ENCODE measurements at regions of chr17 and their contacts with region 1.

Region 1: DNA sequence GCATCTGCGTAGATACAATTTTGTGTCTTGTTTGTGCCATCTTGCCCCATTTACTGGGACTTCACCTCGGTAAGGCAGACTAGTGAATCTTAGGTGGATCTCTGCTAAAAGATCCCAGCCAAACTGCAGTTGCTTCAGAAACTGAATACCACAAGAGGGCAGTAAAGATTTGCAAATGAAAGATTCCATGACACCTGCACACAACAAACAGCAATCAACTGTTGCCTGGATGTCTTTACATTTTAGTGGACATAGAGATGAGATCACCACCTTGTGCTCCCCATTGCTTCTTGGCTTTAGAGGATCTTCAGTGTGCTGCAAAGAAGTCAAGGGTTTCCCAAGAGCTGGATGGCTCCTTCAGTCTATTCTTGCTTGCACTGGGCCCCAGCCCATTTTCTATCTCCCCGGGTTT is 119.2 kb upstream of the CACNG5 start:
- DNase-seq: no peak
- H3K4me3 ChIP-seq: no peak overlapping the region
- H3K27ac ChIP-seq: no peak overlapping the region
- H3K4me1 ChIP-seq: no peaks in the 10 kb centered on the region
- H3K27me3 ChIP-seq: no peaks in the 10 kb centered on the region
- CTCF ChIP-seq: peak; percentile 48 to 75 (median 70)
- POLR2A ChIP-seq: no peak

Region 2: DNA sequence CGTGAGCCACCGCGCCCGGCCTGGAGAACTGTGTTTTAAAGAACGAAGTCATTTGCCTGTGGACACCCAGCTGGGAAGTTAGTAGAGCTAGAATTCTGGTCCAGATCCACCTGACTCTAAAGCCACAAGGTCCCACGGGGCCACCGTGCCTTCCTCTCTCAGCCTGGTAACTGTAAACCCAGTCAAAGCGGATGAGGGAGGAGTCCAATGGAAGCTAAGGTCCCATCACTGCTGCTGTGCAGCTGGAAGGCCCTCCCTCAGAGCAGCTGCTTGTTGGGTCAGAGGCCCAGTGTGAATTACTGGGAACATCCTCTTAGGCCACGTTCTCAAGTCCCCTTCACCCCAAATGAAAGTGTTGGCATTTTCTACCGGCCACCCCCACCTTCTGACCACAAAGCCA is 70.4 kb after region 1 on chr17:
- intact Hi-C with region 1: no loop called
- DNase-seq: no peak
- H3K4me3 ChIP-seq: no peak overlapping the region
- H3K27ac ChIP-seq: no peak overlapping the region
- H3K4me1 ChIP-seq: no peaks in the 10 kb centered on the region
- H3K27me3 ChIP-seq: no peaks in the 10 kb centered on the region
- CTCF ChIP-seq: no peak
- POLR2A ChIP-seq: no peak

Region 3: DNA sequence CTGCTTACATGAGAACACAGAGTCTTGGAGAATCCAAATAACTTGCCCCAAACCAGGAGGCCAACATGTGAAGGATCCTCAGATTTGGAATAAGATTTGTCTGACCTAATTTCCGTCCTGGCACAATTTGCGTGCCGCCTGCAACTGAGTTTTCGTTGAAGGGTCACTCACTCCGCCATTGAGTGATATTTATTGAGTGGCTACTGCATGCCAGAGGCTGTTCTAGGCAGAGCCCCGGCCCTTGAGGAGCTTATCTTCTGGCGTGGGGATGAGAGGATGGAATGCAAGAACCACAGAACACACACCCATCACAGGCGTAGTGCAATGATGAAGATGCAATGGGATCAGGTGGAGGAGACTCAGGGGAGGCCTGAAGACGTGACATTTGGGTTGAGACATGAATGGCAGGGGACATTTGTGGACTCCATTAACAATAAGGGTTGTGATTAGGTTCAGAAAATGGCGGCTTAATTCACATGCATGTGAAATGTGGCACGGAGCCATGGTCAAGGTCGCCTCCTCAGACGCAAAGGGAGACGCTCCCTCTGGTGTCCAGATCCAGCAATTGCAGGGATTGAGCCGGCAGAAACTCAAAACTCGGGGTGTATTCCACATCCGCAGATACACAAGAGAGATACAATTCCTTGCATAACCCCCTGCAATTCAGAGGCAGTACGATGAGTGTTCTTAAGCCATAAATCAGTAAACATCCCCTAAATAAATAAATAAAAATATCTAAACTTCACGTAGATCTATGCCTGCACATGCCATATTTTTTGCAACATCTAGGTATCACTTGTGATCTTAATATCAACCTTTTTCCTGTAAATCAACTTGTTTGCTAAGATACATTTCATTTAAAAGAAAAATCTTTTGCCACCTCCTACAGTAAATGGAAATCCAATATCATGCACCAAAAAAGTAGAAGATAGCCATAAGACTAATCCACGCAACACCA is 190.8 kb after region 1 on chr17:
- intact Hi-C with region 1: loop called (anchors 10 kb)
- DNase-seq: peak; percentile 74 to 85
- H3K4me3 ChIP-seq: no peak overlapping the region
- H3K27ac ChIP-seq: no peak overlapping the region
- H3K4me1 ChIP-seq: no peaks in the 10 kb centered on the region
- H3K27me3 ChIP-seq: no peaks in the 10 kb centered on the region
- CTCF ChIP-seq: peak; percentile 60 to 86 (median 78)
- POLR2A ChIP-seq: no peak